Cardiac septum (tissue), 1 donor: ENCODE measurements at regions of chr13 and their contacts with region 1.

Region 1: DNA sequence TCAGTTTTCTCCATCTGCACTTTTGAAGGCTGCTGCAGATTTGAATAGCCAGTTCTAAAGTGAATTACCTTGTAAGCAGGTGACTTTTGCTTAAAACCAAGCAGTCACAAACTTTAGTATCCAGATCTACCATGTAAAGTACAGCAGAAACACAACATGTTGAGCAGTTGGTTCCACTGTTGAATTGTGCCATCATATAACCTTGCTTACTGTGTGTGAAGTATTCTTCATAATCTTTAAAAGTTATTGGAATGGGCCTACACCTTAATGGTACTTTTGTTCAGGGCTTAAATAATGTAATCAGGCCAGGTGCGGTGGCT is 23.2 kb upstream of the MTUS2 start:
- DNase-seq: no peak

Region 2: GRCh38 chr13:28429685-28430290 is 367.1 kb before region 1 on chr13:
- intact Hi-C with region 1: no loop called
- DNase-seq: no peak

Region 3: DNA sequence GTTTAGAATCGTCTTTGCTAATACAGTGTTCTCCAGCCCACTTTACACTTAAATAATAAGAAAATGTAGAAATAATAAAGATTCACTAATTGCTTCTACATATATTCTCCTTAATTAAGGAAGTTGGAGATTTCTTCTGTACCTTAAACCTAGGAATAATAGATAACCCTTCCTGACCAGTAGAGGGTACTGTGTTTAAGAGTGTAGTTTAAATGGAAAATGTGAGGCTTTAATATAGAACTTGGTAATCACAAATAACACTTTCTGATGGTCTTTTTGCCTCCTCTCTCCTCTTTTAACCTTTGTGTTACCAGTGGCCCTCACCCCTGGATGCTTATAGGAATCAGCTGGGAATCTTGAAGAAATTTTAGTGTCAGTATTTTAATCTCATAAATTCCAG is 117.3 kb before region 1 on chr13:
- intact Hi-C with region 1: loop called (anchors 5 kb)
- DNase-seq: no peak

Region 4: DNA sequence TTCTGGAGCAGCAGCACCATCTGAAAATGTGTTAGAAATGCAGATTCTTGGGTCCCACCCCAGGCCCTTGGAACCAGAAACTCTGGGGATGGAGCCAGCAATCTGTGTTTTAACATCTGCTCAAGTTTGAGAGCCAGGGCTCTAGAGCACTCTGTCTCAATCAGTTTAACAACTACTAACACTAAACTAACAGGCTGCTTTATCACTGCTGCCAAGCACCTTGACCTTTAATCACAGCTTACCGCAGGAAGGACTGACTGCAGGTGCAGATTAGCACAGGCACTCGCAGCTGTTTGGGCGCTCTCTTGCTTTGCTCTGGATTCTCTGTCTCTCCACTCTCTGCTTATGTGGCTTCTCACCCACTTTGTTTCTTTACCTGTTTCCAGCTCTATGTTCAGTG is 186.7 kb after region 1 on chr13:
- intact Hi-C with region 1: no loop called
- DNase-seq: no peak